CD4-positive, alpha-beta memory T cell (primary cell): ENCODE measurements at regions of chr7 and their contacts with region 1.

Region 1: DNA sequence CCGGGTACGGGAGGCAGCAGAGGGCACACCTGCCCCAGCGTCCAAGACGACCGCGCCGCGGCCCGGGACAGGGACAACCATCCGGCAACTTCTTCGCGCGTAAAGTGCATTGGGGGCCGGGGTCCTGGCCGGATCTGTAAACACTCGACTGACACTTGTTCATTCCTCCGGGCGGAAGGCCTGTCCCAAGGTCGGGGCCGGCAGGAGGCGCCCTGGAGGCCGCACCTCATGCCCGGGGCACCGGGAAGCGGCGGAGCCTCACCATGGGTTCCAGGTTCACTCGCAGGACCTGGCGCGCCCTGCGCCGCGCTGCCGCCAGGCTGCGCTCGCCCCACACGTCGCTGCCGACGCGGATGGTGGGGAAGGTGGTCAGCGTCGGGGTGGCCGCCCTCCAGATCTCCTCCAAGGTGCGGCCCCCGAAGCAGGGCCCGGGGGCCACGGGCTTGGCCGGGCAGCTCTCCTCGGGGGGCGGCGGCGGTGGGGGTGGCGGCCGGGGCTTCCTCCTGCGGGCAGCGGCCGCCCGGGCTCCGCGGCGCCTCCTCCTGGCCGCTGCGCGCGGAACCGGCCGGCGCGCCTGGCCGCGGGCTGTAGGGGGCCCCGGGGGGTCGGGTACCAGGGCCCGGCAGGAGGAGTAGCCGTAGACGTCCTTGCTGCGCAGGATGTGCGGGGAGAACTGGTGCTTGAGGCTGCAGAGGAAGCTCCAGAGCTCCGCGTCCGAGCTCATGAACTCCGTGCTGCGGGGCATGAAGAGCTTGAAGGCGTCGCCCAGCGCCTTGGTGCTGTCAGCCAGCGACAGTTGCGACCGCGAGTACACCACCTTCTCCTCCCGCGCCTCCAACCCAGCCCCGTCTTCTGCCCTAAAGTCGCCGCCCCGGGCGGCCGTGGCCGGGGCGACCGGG is 746 bp downstream of the CCDC71L start:
- DNase-seq: peak; percentile 72 to 79 (median 76)
- H3K4me3 ChIP-seq: peak overlapping the region; percentile 14 to 58
- H3K4me3 Mint-ChIP-seq: peak overlapping the region; percentile 85 to 92 (median 88)
- H3K27ac ChIP-seq: peak overlapping the region; percentile 68
- H3K27ac Mint-ChIP-seq: peak overlapping the region; percentile 87 to 97 (median 93)
- H3K4me1 ChIP-seq: peaks cover 35% of the 10 kb centered on the region
- H3K4me1 Mint-ChIP-seq: peaks cover 17 to 40% (median 29%) of the 10 kb centered on the region in 4 donors
- H3K27me3 ChIP-seq: no peaks in the 10 kb centered on the region
- H3K27me3 Mint-ChIP-seq: no peaks in the 10 kb centered on the region

Region 2: DNA sequence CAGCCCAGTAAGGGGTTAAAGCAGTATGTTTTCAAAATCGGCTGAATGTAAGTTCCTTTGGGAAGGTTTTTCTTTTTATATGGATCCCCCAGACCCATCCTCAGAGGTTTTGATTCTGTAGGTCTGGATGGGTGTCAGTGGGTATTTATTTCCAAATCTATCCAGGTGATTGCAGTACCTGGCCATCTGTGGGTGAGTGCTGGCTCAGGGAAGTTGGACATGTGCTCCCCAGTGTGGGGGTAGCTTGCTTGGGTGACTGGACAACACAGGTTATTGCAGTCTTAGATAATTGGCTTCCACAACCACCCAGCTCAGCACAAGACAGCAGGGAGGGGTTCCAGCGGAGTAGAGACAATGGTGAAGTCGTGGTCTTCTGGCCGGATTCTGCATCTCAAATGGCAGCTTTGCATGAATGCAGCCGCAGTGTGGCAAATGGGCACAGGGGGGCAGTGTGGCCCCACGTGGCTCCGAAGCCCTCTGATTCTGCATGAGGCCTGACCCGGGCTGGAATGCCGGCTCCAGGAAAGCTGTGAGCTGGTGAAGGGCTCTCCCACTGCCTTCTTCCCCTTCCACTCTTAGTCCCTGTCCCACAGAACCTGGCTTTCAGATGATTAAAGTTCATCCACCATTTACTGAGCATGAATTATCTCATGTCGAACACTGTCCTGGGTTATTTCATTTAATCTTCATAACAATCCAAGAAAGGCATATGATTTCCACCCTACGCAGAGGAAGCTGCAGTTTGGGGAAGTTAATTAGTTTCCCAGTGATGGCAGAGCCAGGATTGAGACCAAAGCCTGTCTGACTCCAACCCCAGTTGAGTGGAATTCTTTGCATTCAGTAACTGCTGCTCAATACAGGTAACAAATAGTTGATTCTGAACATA is 483.6 kb before region 1 on chr7:
- CTCF ChIA-PET with region 1: interaction called, 8 read pairs
- POLR2A ChIA-PET with region 1: no interaction called
- intact Hi-C with region 1: loop called (anchors 1 kb)
- DNase-seq: peak; percentile 46 to 58 (median 51)
- H3K4me3 ChIP-seq: no peak overlapping the region
- H3K4me3 Mint-ChIP-seq: no peak overlapping the region
- H3K27ac ChIP-seq: no peak overlapping the region
- H3K27ac Mint-ChIP-seq: peak overlapping the region in 1 of 7 donors; percentile 14
- H3K4me1 ChIP-seq: no peaks in the 10 kb centered on the region
- H3K4me1 Mint-ChIP-seq: peaks cover 0 to 4% (median 3%) of the 10 kb centered on the region in 4 donors
- H3K27me3 ChIP-seq: no peaks in the 10 kb centered on the region
- H3K27me3 Mint-ChIP-seq: peaks cover 3 to 10% of the 10 kb centered on the region in 2 donors

Region 3: GRCh38 chr7:106542550-106543220 is 117.5 kb before region 1 on chr7:
- CTCF ChIA-PET with region 1: interaction called, 15 read pairs
- POLR2A ChIA-PET with region 1: interaction called, 3 read pairs
- intact Hi-C with region 1: loop called (anchors 1 kb)
- DNase-seq: peak; percentile 29 to 61 (median 37)
- H3K4me3 ChIP-seq: no peak overlapping the region
- H3K4me3 Mint-ChIP-seq: peak overlapping the region in 1 of 8 donors; percentile 2
- H3K27ac ChIP-seq: no peak overlapping the region
- H3K27ac Mint-ChIP-seq: peak overlapping the region in 5 of 7 donors; percentile 5 to 74 (median 13)
- H3K4me1 ChIP-seq: peaks cover 6% of the 10 kb centered on the region
- H3K4me1 Mint-ChIP-seq: peaks cover 9 to 16% (median 12%) of the 10 kb centered on the region in 4 donors
- H3K27me3 ChIP-seq: no peaks in the 10 kb centered on the region
- H3K27me3 Mint-ChIP-seq: no peaks in the 10 kb centered on the region

Region 4: GRCh38 chr7:106704000-106704840 is 44.0 kb after region 1 on chr7:
- CTCF ChIA-PET with region 1: interaction called, 4 read pairs
- POLR2A ChIA-PET with region 1: interaction called, 3 read pairs
- intact Hi-C with region 1: loop called (anchors 5 kb)
- DNase-seq: peak; percentile 17 to 39 (median 24)
- H3K4me3 ChIP-seq: no peak overlapping the region
- H3K4me3 Mint-ChIP-seq: peak overlapping the region; percentile 22 to 72 (median 52)
- H3K27ac ChIP-seq: peak overlapping the region; percentile 29
- H3K27ac Mint-ChIP-seq: peak overlapping the region; percentile 8 to 91 (median 88)
- H3K4me1 ChIP-seq: peaks cover 15% of the 10 kb centered on the region
- H3K4me1 Mint-ChIP-seq: peaks cover 9 to 24% (median 14%) of the 10 kb centered on the region in 4 donors
- H3K27me3 ChIP-seq: no peaks in the 10 kb centered on the region
- H3K27me3 Mint-ChIP-seq: peaks cover 0 to 3% of the 10 kb centered on the region in 2 donors

Region 5: DNA sequence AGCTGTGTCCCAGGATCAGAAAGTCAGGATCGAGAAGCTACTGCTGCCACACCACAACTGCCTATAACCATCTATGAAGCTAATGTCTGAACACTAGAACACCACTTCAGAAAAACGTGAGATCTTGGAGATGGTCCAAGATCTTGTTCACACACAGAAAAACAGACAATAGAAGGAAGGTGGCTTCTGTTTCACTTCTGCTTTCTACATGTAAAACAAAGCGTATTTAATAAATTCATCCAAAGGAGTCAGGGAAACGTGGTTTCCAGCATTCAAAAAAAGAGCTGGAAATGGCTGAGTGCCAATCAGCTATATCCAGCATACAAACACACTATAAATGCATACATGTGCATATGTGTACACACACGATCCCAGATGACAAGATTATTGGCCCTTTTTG is 71.0 kb after region 1 on chr7:
- CTCF ChIA-PET with region 1: interaction called, 120 read pairs
- POLR2A ChIA-PET with region 1: interaction called, 51 read pairs
- intact Hi-C with region 1: loop called (anchors 1 kb)
- DNase-seq: no peak
- H3K4me3 ChIP-seq: no peak overlapping the region
- H3K4me3 Mint-ChIP-seq: peak overlapping the region in 1 of 8 donors; percentile 10
- H3K27ac ChIP-seq: no peak overlapping the region
- H3K27ac Mint-ChIP-seq: no peak overlapping the region
- H3K4me1 ChIP-seq: peaks cover 7% of the 10 kb centered on the region
- H3K4me1 Mint-ChIP-seq: peaks cover 5 to 25% (median 18%) of the 10 kb centered on the region in 4 donors
- H3K27me3 ChIP-seq: no peaks in the 10 kb centered on the region
- H3K27me3 Mint-ChIP-seq: no peaks in the 10 kb centered on the region

Region 6: GRCh38 chr7:106865130-106866041 is 205.2 kb after region 1 on chr7 and contains the start of gene PIK3CG:
- CTCF ChIA-PET with region 1: interaction called, 3 read pairs
- POLR2A ChIA-PET with region 1: no interaction called
- intact Hi-C with region 1: loop called (anchors 1 kb)
- DNase-seq: peak; percentile 58 to 77 (median 66)
- H3K4me3 ChIP-seq: peak within 1 kb of the TSS; percentile 68 to 83
- H3K4me3 Mint-ChIP-seq: peak within 1 kb of the TSS; percentile 90 to 97 (median 93)
- H3K27ac ChIP-seq: peak within 1 kb of the TSS; percentile 66
- H3K27ac Mint-ChIP-seq: peak within 1 kb of the TSS; percentile 88 to 95 (median 92)
- H3K4me1 ChIP-seq: peaks cover 67% of the 10 kb centered on the region
- H3K4me1 Mint-ChIP-seq: peaks cover 57 to 87% (median 69%) of the 10 kb centered on the region in 4 donors
- H3K27me3 ChIP-seq: no peaks in the 10 kb centered on the region
- H3K27me3 Mint-ChIP-seq: no peaks in the 10 kb centered on the region
- total RNA-seq, gene PIK3CG: 32.3 to 32.6 TPM